ENCODE measurements at regions of chr13 and their contacts with region 1.

Region 1: DNA sequence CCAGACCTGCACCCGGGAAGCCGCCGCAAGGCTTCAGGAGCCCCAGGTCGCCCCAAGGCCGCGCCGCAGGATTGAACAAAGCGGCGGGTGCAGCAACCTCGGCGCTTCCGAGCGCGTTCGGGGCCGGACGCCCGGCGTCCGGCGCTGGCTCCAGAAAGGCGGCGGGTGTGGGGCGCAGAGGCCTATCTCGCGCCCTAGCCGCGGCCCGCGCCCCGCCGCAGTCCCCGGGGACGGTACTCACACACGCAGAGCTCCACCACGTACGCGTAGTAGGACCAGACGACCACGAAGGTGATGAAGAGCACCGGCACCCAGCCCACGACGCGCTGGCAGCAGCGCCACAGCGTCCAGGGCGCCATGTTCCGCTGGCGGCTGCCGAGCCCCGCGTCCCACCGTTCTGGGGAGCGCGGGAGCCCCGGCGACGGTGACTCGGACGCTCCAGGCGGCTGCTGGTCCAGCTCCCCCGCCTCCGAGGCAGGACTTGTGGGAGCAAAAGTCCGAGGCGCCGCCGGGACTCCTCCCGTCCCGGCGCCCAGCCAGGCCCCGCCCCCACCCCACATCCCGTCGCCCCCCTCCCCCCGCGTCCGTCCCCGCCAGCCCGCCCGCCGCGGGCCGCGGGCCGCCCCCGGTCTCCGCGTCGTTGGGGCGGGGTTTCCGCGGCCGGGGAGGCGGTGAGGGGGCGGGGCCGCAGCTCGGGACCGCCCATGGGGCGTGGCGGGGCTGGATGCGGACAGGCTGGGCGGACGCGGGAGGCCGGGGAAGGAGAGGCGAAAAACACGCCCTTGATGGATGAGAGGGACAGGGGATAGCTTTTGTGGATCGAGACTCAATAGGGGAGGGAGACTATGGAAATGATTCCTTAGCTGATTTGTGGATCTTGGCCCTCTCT is at the start of gene ZDHHC20:
- DNase-seq: peak; percentile 75 to 95 (median 88)
- ATAC-seq: peak; percentile 85
- H3K4me3 ChIP-seq: peak within 1 kb of the TSS; percentile 90
- H3K4me3 Mint-ChIP-seq: peak within 1 kb of the TSS; percentile 97
- H3K27ac ChIP-seq: peak within 1 kb of the TSS; percentile 56 to 84
- H3K27ac Mint-ChIP-seq: peak within 1 kb of the TSS; percentile 92
- H3K4me1 ChIP-seq: peaks cover 12% of the 10 kb centered on the region
- H3K4me1 Mint-ChIP-seq: peaks cover 42% of the 10 kb centered on the region
- H3K27me3 ChIP-seq: no peaks in the 10 kb centered on the region
- H3K27me3 Mint-ChIP-seq: no peaks in the 10 kb centered on the region
- CTCF ChIP-seq: no peak
- total RNA-seq, gene ZDHHC20: 62.8 to 65.1 TPM

Region 2: GRCh38 chr13:19633479-19634255 is 1825.4 kb before region 1 on chr13 and contains the start of gene MPHOSPH8:
- CTCF ChIA-PET with region 1: no interaction called
- POLR2A ChIA-PET with region 1: no interaction called
- intact Hi-C with region 1: loop called in 1 of 2 experiments (anchors 10 kb)
- DNase-seq: peak; percentile 86 to 98 (median 92)
- ATAC-seq: peak; percentile 96
- H3K4me3 ChIP-seq: peak within 1 kb of the TSS; percentile 84
- H3K4me3 Mint-ChIP-seq: peak within 1 kb of the TSS; percentile 100
- H3K27ac ChIP-seq: peak within 1 kb of the TSS; percentile 76 to 79
- H3K27ac Mint-ChIP-seq: peak within 1 kb of the TSS; percentile 97
- H3K4me1 ChIP-seq: peaks cover 29% of the 10 kb centered on the region
- H3K4me1 Mint-ChIP-seq: peaks cover 38% of the 10 kb centered on the region
- H3K27me3 ChIP-seq: no peaks in the 10 kb centered on the region
- H3K27me3 Mint-ChIP-seq: no peaks in the 10 kb centered on the region
- CTCF ChIP-seq: no peak
- total RNA-seq, gene MPHOSPH8: 48.0 to 51.2 TPM

Region 3: DNA sequence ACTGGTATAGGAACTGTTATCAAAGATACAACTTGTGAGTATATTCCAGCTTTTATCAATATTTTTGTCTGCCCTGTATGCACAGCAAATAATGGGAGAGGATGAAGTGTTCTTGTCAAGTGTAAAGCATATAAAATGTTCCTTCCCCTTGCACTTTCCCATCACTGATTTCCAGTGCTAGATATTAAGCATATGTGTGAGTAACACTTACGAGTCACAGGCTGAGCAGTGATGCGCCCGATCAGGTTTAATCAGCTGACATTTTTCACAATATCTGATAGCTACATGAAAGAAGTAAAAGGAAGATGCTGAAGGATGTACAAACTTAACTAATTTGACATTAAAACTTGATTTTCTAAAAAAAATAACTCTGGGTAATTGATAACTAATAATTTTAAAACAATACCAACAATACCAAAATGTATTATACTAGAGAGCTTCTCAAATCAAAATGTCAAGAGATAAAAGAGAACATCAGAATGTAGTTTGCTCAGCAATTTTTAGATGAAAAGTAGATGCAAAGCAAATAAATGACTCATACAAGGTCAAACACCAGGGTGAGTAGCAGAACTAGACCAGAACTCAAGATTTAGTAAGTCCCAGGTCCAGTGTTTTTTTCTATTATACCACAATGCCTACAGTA is 56.4 kb before region 1 on chr13:
- CTCF ChIA-PET with region 1: no interaction called
- POLR2A ChIA-PET with region 1: interaction called, 10 read pairs
- intact Hi-C with region 1: loop called (anchors 5 kb)
- DNase-seq: peak in 2 of 14 experiments; percentile 17 to 26
- ATAC-seq: no peak
- H3K4me3 ChIP-seq: no peak overlapping the region
- H3K4me3 Mint-ChIP-seq: no peak overlapping the region
- H3K27ac ChIP-seq: no peak overlapping the region
- H3K27ac Mint-ChIP-seq: peak overlapping the region; percentile 50
- H3K4me1 ChIP-seq: peaks cover 4% of the 10 kb centered on the region
- H3K4me1 Mint-ChIP-seq: peaks cover 36% of the 10 kb centered on the region
- H3K27me3 ChIP-seq: no peaks in the 10 kb centered on the region
- H3K27me3 Mint-ChIP-seq: no peaks in the 10 kb centered on the region
- CTCF ChIP-seq: no peak

Region 4: GRCh38 chr13:21420706-21421105 is 38.4 kb before region 1 on chr13:
- CTCF ChIA-PET with region 1: no interaction called
- POLR2A ChIA-PET with region 1: interaction called, 4 read pairs
- intact Hi-C with region 1: loop called in 1 of 2 experiments (anchors 5 kb)
- DNase-seq: no peak
- ATAC-seq: no peak
- H3K4me3 ChIP-seq: no peak overlapping the region
- H3K4me3 Mint-ChIP-seq: no peak overlapping the region
- H3K27ac ChIP-seq: no peak overlapping the region
- H3K27ac Mint-ChIP-seq: no peak overlapping the region
- H3K4me1 ChIP-seq: no peaks in the 10 kb centered on the region
- H3K4me1 Mint-ChIP-seq: peaks cover 14% of the 10 kb centered on the region
- H3K27me3 ChIP-seq: no peaks in the 10 kb centered on the region
- H3K27me3 Mint-ChIP-seq: no peaks in the 10 kb centered on the region
- CTCF ChIP-seq: no peak

Region 5: DNA sequence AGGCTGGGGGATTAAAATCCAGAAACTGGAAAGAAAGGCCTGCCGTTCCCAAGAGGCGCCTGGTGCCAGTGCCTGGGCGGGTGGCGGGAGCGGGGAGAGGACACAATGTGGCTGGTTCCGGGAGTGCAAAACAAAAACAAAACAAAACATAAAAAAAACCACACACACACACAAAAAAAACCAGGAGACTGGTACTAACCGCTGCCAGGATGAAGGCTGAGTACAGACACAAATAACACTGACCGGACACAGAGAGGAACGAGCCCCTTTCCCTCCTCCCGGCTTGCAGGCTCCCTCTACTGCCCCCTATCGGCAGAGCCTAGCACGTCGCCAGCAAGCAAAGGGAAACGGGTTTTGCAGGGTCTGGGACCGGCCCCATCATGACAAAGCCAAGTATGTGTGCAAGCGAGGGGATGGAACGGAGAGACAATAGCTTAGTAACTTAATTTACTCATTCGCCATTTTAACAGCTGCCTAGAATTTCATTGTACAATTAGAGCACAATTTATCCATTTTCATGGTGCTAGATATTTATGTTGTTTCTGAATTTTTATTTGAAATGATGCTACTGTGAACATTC is 17.9 kb after region 1 on chr13:
- CTCF ChIA-PET with region 1: interaction called, 12 read pairs
- POLR2A ChIA-PET with region 1: interaction called, 6 read pairs
- intact Hi-C with region 1: no loop called
- DNase-seq: peak; percentile 64 to 89 (median 72)
- ATAC-seq: peak; percentile 80
- H3K4me3 ChIP-seq: peak overlapping the region; percentile 37
- H3K4me3 Mint-ChIP-seq: peak overlapping the region; percentile 78
- H3K27ac ChIP-seq: no peak overlapping the region
- H3K27ac Mint-ChIP-seq: no peak overlapping the region
- H3K4me1 ChIP-seq: peaks cover 6% of the 10 kb centered on the region
- H3K4me1 Mint-ChIP-seq: peaks cover 17% of the 10 kb centered on the region
- H3K27me3 ChIP-seq: no peaks in the 10 kb centered on the region
- H3K27me3 Mint-ChIP-seq: peaks cover 10% of the 10 kb centered on the region
- CTCF ChIP-seq: peak; percentile 97